Activated T-helper 1 cell treated with anti-CD3 and anti-CD28 coated beads, Interleukin-12 subunit alpha, Interleukin-12 subunit beta, Interleukin-2, Interleukin-4 antibody, amounts not matched to agents 30 ng/mL and 10 ng/mL and 1 ng/mL, durations not matched to agents 14 hours and 24 hours and 36 hours (primary cell): ENCODE measurements at regions of chr1 and their contacts with region 1.

Region 1: DNA sequence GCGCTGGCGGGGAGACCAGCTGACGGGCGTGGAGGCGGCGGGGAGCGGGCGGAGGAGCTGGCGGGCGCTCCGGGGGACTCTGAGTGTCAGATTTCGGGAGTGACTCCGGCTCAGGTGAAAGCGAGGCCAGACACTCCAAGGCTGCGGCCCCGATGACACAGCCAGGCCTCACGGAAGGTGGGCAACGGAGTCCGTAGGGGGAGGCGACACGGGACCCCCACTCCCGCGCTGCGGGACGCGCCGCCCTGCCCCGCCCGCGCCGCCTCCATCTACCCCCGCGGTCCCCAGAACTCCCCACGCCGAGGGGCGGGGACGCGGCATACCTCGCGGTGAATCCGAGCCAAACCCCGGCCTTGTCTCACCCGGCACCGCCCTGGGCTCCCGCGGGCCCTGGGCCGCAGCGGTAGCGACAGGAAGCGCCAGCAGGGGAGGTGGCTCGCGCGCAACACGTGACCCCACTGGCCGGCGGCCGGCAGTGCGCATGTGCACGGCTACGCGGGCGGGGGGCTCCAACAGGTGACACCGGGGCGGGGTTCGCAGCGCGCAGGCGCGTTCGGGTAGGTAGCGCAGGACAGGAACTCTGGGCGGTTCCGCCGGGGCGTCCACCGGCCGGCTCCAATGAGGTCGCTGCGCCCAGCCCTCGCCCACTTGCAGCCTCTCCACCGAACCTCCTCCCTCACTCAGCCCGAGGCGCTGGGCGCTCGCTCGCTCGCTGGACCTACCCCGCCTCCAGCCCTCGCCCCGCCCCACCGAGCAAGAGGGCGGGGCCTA is at the start of gene CC2D1B:
- DNase-seq: peak; percentile 100
- H3K4me3 Mint-ChIP-seq: peak within 1 kb of the TSS; percentile 90
- H3K27ac Mint-ChIP-seq: peak within 1 kb of the TSS; percentile 84
- H3K4me1 Mint-ChIP-seq: peaks cover 55% of the 10 kb centered on the region
- H3K27me3 Mint-ChIP-seq: no peaks in the 10 kb centered on the region
- total RNA-seq, gene CC2D1B: 40.5 and 42.3 TPM in 2 replicates

Region 2: DNA sequence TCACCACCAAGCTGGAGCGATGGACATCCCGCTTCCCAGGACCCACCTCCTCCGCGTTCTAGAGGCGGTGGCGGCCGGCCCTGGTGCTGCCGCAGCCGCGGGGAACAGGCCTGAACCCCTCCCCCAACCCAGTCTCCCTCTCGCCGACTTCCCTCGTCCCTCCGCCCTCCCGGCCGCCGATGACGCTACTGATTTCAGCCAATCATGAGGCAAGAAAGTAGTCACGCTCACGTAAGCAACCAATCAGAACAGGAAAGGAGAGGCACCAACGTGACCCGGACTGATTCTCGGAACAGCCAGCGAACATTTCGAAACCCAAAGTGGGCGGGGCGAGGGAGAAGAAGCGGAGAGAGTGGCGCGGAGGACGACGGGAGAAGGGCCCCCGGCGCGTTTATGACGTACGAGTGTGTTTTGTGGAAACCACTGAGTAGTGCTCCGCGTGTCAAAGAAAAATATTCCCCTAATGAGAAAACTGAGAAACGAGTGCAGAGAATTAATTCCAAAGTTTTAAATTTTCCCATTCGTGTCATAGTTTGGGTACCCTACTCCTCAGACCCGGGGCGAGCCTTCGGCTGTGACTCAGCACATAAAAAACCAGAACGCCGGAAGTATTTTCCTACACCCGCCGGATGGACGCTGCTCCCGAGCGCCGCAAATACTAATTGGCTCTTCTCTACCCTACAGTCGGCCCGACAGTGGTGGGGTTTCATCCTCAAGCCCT is 487.2 kb before region 1 on chr1 and contains the start of gene NRDC:
- intact Hi-C with region 1: loop called (anchors 1 kb)
- DNase-seq: peak; percentile 99
- H3K4me3 Mint-ChIP-seq: no peak within 1 kb of the TSS
- H3K27ac Mint-ChIP-seq: no peak within 1 kb of the TSS
- H3K4me1 Mint-ChIP-seq: no peaks in the 10 kb centered on the region
- H3K27me3 Mint-ChIP-seq: peaks cover 14% of the 10 kb centered on the region
- total RNA-seq, gene NRDC: 177 and 185 TPM in 2 replicates

Region 3: DNA sequence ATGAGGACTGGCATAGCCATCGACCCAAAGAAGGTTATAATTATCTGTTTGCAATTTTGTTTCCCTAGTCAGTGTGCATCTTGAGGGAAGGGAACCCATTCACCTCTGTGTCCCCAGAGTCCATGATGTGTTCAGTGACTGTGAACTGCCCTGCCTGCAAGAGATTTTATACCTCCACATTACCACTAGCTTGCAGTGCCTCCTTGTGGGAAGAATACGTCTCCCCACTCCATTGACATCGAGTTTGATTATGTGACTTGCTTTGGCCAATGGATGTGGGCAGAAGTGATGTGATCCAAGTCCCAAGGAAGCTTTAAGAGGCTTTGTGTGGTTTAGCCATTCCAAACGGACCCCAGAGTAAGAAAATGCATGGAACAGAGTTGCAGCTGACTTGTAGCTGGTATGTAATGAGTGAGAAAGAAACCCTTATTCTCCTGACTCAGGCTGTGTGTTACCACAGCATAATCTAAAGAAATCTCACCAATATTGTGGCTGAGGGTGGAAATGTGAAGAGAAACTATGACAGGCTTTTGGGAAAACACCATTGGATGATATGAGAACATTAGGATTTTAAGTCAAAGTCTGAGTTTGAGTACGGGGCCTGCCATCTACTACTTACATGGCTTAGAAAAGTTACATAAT is 439.6 kb before region 1 on chr1:
- intact Hi-C with region 1: no loop called
- DNase-seq: no peak
- H3K4me3 Mint-ChIP-seq: no peak overlapping the region
- H3K27ac Mint-ChIP-seq: no peak overlapping the region
- H3K4me1 Mint-ChIP-seq: no peaks in the 10 kb centered on the region
- H3K27me3 Mint-ChIP-seq: peaks cover 3% of the 10 kb centered on the region

Region 4: GRCh38 chr1:52141513-52142219 is 224.3 kb before region 1 on chr1 and contains the start of gene ZFYVE9:
- intact Hi-C with region 1: loop called (anchors 1 kb)
- DNase-seq: peak; percentile 60
- H3K4me3 Mint-ChIP-seq: peak within 1 kb of the TSS; percentile 80
- H3K27ac Mint-ChIP-seq: peak within 1 kb of the TSS; percentile 67
- H3K4me1 Mint-ChIP-seq: peaks cover 34% of the 10 kb centered on the region
- H3K27me3 Mint-ChIP-seq: peaks cover 46% of the 10 kb centered on the region
- total RNA-seq, gene ZFYVE9: 3.2 and 4.1 TPM in 2 replicates

Region 5: DNA sequence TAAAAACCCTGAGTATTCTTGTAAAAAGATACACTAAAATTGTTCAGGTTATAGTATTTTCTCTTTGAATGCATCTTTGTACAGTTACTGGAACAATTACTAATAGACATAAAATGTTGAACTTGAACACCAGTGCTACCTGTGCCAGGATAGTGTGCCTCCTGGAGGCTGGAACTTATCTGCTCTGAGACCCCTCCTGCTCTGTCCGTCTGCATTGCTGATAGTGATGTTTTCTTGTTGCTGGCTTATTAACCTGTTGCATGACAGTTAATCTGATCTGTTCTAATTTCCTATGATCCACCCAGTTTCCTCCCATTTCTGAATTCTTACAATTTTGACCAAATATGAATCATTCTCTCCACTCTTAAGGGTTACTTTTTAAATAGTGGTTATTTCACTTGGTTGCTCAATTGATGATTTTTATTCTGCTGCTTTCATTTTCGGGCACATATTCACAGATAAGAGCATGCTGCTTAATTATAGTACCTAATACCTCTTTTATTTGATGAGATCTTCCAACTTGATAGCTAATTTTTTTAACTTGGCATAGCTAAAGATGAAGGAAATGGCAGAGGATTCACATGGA is 101.3 kb before region 1 on chr1:
- intact Hi-C with region 1: no loop called
- DNase-seq: no peak
- H3K4me3 Mint-ChIP-seq: no peak overlapping the region
- H3K27ac Mint-ChIP-seq: no peak overlapping the region
- H3K4me1 Mint-ChIP-seq: no peaks in the 10 kb centered on the region
- H3K27me3 Mint-ChIP-seq: peaks cover 3% of the 10 kb centered on the region

Region 6: GRCh38 chr1:52683367-52683940 is 317.5 kb after region 1 on chr1:
- intact Hi-C with region 1: loop called (anchors 1 kb)
- DNase-seq: no peak
- H3K4me3 Mint-ChIP-seq: no peak overlapping the region
- H3K27ac Mint-ChIP-seq: no peak overlapping the region
- H3K4me1 Mint-ChIP-seq: peaks cover 26% of the 10 kb centered on the region
- H3K27me3 Mint-ChIP-seq: no peaks in the 10 kb centered on the region

Region 7: GRCh38 chr1:52927212-52928014 is 561.5 kb after region 1 on chr1 and contains the start of gene SCP2:
- intact Hi-C with region 1: loop called (anchors 10 kb)
- DNase-seq: peak; percentile 74
- H3K4me3 Mint-ChIP-seq: peak within 1 kb of the TSS; percentile 90
- H3K27ac Mint-ChIP-seq: peak within 1 kb of the TSS; percentile 83
- H3K4me1 Mint-ChIP-seq: peaks cover 15% of the 10 kb centered on the region
- H3K27me3 Mint-ChIP-seq: peaks cover 8% of the 10 kb centered on the region
- total RNA-seq, gene SCP2: 54.7 and 58.3 TPM in 2 replicates

Region 8: GRCh38 chr1:53837924-53838652 is 1472.2 kb after region 1 on chr1 and contains the start of gene NDC1:
- intact Hi-C with region 1: loop called (anchors 10 kb)
- DNase-seq: peak; percentile 86
- H3K4me3 Mint-ChIP-seq: peak within 1 kb of the TSS; percentile 100
- H3K27ac Mint-ChIP-seq: peak within 1 kb of the TSS; percentile 98
- H3K4me1 Mint-ChIP-seq: peaks cover 26% of the 10 kb centered on the region
- H3K27me3 Mint-ChIP-seq: peaks cover 4% of the 10 kb centered on the region
- total RNA-seq, gene NDC1: 33.2 and 38.2 TPM in 2 replicates